IMR-90 (cell line): ENCODE measurements at regions of chr1 and their contacts with region 1.

Region 1: GRCh38 chr1:238484121-238484520 is 593.4 kb upstream of the ZP4 start:
- DNase-seq: peak; percentile 44
- ATAC-seq: no peak
- H3K4me3 ChIP-seq: no peak overlapping the region
- H3K27ac ChIP-seq: no peak overlapping the region
- H3K4me1 ChIP-seq: peaks cover 2% of the 10 kb centered on the region; the same call in 1 of the 2 replicates
- H3K27me3 ChIP-seq: no peaks in the 10 kb centered on the region
- CTCF ChIP-seq: no peak
- POLR2A ChIP-seq: no peak
- RAD21 ChIP-seq: no peak

Region 2: GRCh38 chr1:237998581-237998980 is 485.5 kb before region 1 on chr1:
- CTCF ChIA-PET with region 1: no interaction called
- POLR2A ChIA-PET with region 1: no interaction called
- dilution Hi-C with region 1: no loop called
- in situ Hi-C with region 1: no loop called
- intact Hi-C with region 1: no loop called
- DNase-seq: no peak
- ATAC-seq: no peak
- H3K4me3 ChIP-seq: no peak overlapping the region
- H3K27ac ChIP-seq: no peak overlapping the region
- H3K4me1 ChIP-seq: no peaks in the 10 kb centered on the region
- H3K27me3 ChIP-seq: no peaks in the 10 kb centered on the region
- CTCF ChIP-seq: no peak
- POLR2A ChIP-seq: no peak
- RAD21 ChIP-seq: no peak

Region 3: DNA sequence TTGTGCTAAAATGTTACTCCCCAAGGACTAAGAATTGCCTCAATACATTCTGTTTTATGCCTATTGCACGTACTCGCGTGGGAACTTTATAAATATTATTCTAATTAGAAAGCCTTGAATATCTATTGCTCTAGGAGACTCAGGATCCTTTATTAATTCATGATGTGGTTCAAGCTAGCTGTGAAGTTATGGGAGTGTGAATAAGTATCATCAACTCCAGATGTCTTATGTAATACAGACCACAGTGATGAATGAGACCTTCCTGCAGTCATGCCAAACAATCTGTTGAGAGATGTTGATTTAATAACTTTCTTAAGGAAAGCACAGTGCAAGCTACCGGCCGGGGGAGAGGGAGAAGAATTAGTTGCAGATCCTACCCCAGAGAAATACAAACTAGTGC is 74.2 kb before region 1 on chr1:
- CTCF ChIA-PET with region 1: no interaction called
- POLR2A ChIA-PET with region 1: no interaction called
- dilution Hi-C with region 1: no loop called
- in situ Hi-C with region 1: no loop called
- intact Hi-C with region 1: loop called (anchors 5 kb)
- DNase-seq: peak; percentile 44
- ATAC-seq: no peak
- H3K4me3 ChIP-seq: no peak overlapping the region
- H3K27ac ChIP-seq: no peak overlapping the region
- H3K4me1 ChIP-seq: peaks cover 9% of the 10 kb centered on the region
- H3K27me3 ChIP-seq: no peaks in the 10 kb centered on the region
- CTCF ChIP-seq: no peak
- POLR2A ChIP-seq: no peak
- RAD21 ChIP-seq: no peak